HepG2 (cell line): ENCODE measurements at regions of chr1 and their contacts with region 1.

Region 1: DNA sequence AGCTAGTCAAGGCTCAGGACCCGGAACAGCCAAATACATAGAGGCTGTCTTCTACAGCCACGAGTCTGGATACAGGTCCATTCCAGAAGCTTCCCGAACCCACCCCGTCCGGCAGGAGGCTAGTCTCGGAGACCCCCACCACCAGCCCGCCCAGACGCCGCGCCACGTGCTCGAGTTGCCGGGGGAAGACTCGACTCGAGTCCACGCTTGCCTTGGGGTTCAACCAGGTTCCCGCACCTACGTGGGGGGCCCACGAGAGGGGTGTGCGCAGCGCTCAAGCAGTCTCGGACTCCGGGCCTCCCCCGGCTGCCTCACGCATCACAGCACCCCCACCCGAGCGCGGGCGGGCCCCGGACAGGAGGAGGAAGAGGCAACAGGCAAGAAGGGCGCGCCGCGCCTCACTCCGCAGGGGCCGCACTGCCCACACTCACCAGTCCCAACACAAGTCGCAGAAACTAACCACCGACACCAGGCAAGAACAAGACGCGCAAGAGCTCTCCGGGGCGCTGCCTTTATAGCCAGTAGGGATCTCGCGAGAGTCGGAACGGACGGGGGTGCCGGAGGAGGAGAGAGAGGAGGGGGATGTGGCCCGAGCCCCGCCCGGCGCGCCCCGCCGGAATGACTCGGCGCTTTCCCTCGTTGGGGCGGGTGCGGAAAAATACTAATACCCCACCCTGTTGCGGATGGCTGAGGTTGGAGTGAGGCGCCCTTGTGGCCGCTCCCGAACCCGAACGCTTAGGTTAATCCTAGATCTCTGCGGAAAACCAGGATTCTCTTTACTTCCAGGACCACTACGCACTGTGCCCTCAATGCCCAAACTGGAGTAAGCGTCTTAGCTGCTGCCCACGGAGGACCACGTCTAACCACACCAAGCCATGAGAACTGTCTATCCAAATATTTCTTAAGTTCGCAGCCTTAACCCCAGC is at the start of gene PRDX1:
- DNase-seq: peak; percentile 94
- ATAC-seq: peak; percentile 82
- H3K4me3 ChIP-seq: peak within 1 kb of the TSS; percentile 95 to 99 (median 96)
- H3K27ac ChIP-seq: peak within 1 kb of the TSS; percentile 100
- H3K4me1 ChIP-seq: peaks cover 72% of the 10 kb centered on the region
- H3K27me3 ChIP-seq: no peaks in the 10 kb centered on the region; a peak in 1 of 5 replicates
- CTCF ChIP-seq: peak; percentile 47
- EP300 ChIP-seq: peak in 1 of 2 experiments; percentile 85; a peak in 3 of 4 replicates
- POLR2A ChIP-seq: peak; percentile 99 to 100
- RAD21 ChIP-seq: peak; percentile 66
- total RNA-seq, gene PRDX1: 1,898 and 2,651 TPM in 2 replicates

Region 2: DNA sequence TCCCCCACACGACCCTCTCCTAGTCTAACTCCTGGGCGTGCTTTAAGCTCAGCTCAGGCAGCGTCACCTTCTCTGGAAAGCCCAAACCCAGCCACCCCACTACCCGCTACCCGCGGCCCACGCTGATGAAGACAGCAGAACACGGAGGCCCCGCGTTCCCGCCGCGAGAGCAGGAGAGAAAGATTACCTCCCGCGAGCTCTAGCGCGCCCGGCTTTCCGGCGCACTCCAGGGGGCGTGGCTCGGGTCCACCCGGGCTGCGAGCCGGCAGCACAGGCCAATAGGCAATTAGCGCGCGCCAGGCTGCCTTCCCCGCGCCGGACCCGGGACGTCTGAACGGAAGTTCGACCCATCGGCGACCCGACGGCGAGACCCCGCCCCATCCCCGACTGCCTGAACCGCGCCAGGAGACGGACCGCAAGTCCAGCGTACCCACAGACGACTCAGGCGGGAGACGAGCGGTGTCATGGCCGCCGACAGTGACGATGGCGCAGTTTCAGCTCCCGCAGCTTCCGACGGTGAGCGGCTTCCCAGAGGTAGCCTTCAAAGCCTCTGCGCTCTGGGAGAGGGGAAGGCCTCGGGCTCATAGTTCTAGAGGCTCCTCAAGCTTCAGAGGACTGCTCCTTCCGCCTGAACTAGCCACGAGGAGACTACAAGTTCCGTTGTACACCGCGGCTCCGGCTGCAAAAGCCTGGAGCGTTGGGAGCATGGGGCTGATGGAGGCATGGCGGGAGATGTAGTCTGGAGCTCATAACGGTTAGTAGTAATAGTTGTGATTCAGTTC is 181.7 kb before region 1 on chr1 and contains the starts of genes MUTYH and TOE1:
- CTCF ChIA-PET with region 1: no interaction called
- POLR2A ChIA-PET with region 1: interaction called, 16 read pairs
- in situ Hi-C with region 1: no loop called
- intact Hi-C with region 1: no loop called
- DNase-seq: peak; percentile 87
- ATAC-seq: peak; percentile 86
- H3K4me3 ChIP-seq: peak within 1 kb of the TSS; percentile 68 to 83 (median 80)
- H3K27ac ChIP-seq: peak within 1 kb of the TSS; percentile 91
- H3K4me1 ChIP-seq: peaks cover 59% of the 10 kb centered on the region
- H3K27me3 ChIP-seq: no peaks in the 10 kb centered on the region; a peak in 1 of 5 replicates
- CTCF ChIP-seq: peak; percentile 24; the same call in 1 of the 2 replicates
- EP300 ChIP-seq: no peak
- POLR2A ChIP-seq: peak; percentile 87 to 90
- RAD21 ChIP-seq: peak; percentile 56
- total RNA-seq, gene MUTYH: 12.7 and 17.1 TPM in 2 replicates
- total RNA-seq, gene TOE1: 17.4 and 19.0 TPM in 2 replicates

Region 3: GRCh38 chr1:45499415-45499769 is 22.3 kb before region 1 on chr1:
- CTCF ChIA-PET with region 1: no interaction called
- POLR2A ChIA-PET with region 1: interaction called, 144 read pairs
- in situ Hi-C with region 1: no loop called
- intact Hi-C with region 1: no loop called
- DNase-seq: no peak
- ATAC-seq: no peak; the same call in 1 of the 3 replicates
- H3K4me3 ChIP-seq: peak overlapping the region; percentile 74 to 83 (median 77)
- H3K27ac ChIP-seq: peak overlapping the region; percentile 71
- H3K4me1 ChIP-seq: peaks cover 43% of the 10 kb centered on the region
- H3K27me3 ChIP-seq: no peaks in the 10 kb centered on the region; a peak in 1 of 5 replicates
- CTCF ChIP-seq: no peak
- EP300 ChIP-seq: no peak
- POLR2A ChIP-seq: no peak
- RAD21 ChIP-seq: no peak

Region 4: DNA sequence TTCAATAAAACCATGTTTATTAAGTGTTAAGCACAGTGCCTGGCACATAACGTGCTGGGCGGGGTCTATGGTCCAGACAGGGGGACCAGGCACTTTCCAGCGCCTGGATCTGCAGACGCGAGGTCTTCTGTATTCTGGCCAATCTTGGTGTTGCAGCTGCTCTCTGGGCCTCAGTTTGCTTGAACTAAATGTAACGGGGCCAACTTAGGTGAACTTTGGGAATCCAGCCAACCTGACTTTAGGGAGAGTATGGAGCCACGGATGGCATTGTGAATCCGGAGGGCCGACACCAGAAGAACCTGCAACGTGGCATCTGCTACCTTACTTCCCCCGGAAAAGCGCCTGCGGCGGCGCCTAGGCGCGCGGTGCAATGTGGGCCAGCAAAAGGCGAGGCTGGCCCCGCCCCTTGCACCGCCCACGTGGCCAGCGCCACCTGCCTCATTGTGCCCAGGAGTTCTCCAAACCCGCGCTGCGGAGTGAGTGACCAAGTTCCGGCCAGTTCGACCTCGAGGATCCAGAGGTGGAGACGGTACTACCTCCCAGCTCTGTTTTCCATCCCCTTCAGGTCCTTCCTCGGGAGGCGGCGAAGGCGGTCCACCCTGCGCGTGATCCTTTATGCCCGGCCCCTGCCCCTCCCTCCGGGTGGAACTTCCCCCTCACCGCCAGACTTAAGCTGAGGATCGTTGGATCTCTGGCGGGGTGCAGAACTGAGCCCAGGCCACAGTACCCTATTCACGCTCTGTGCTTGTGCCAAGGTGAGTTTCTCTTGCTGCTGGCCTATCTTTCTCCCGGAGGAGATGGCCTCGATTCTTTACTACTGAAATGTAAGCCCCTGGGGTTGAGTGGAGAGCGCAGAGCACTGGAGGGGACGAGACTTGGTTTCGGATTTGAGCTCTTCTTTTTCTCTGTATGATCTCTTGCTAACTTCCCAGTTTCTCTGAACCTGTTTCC is 29.0 kb after region 1 on chr1 and contains the start of gene AKR1A1:
- CTCF ChIA-PET with region 1: no interaction called
- POLR2A ChIA-PET with region 1: interaction called, 690 read pairs
- in situ Hi-C with region 1: no loop called
- intact Hi-C with region 1: loop called (anchors 1 kb)
- DNase-seq: peak; percentile 87
- ATAC-seq: peak; percentile 91
- H3K4me3 ChIP-seq: peak within 1 kb of the TSS; percentile 75 to 87 (median 82)
- H3K27ac ChIP-seq: peak within 1 kb of the TSS; percentile 92
- H3K4me1 ChIP-seq: peaks cover 48% of the 10 kb centered on the region
- H3K27me3 ChIP-seq: no peaks in the 10 kb centered on the region; a peak in 1 of 5 replicates
- CTCF ChIP-seq: peak; percentile 38; the same call in 1 of the 2 replicates
- EP300 ChIP-seq: no peak; a peak in 1 of 4 replicates
- POLR2A ChIP-seq: peak; percentile 93 to 97
- RAD21 ChIP-seq: peak; percentile 54
- total RNA-seq, gene AKR1A1: 217 and 233 TPM in 2 replicates

Region 5: GRCh38 chr1:45569962-45570581 is 48.4 kb after region 1 on chr1:
- CTCF ChIA-PET with region 1: no interaction called
- POLR2A ChIA-PET with region 1: interaction called, 49 read pairs
- in situ Hi-C with region 1: no loop called
- intact Hi-C with region 1: no loop called
- DNase-seq: peak; percentile 65
- ATAC-seq: peak; percentile 81
- H3K4me3 ChIP-seq: no peak overlapping the region
- H3K27ac ChIP-seq: no peak overlapping the region
- H3K4me1 ChIP-seq: no peaks in the 10 kb centered on the region
- H3K27me3 ChIP-seq: no peaks in the 10 kb centered on the region
- CTCF ChIP-seq: peak; percentile 96
- EP300 ChIP-seq: no peak
- POLR2A ChIP-seq: peak in 1 of 2 experiments; percentile 29; a peak in 1 of 4 replicates
- RAD21 ChIP-seq: peak; percentile 87

Region 6: DNA sequence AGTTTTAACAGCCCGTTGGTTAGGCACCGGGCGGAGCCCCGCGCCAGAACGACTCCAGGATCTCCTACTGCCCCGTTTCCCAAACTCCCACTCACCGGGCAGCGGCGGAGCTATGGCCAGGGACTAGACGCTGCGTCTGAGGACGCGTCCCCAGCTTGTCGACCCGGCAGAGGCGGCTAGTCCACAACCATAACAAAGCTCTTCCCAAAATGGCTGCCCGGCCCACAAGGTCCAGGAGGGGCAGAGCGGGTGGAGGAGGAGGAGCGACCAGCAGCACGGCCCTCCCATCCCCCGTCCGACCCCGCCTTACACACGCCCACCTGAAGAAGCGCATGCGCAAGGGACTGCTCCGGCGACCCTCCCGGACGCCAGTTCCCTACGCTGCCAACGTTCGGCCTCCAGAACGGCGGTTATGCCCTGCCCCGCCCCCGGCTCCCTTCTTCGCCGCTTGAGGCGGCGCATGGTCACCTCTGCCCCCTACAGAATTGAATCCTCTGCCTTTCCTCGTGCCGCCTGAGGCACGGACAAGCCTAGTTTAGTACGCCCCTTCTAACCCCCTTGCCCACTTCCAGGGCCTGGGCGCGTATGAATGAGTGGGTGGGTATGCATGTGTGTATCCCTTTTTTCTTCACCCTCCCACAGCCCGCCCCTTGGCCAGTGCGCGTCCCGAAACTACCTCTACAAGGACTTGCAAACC is 164.8 kb after region 1 on chr1 and contains the start of gene GPBP1L1:
- CTCF ChIA-PET with region 1: no interaction called
- POLR2A ChIA-PET with region 1: interaction called, 13 read pairs
- in situ Hi-C with region 1: no loop called
- intact Hi-C with region 1: no loop called
- DNase-seq: peak; percentile 91
- ATAC-seq: peak; percentile 81
- H3K4me3 ChIP-seq: peak within 1 kb of the TSS; percentile 83 to 98 (median 93)
- H3K27ac ChIP-seq: peak within 1 kb of the TSS; percentile 99
- H3K4me1 ChIP-seq: peaks cover 49% of the 10 kb centered on the region
- H3K27me3 ChIP-seq: peaks cover 0 to 5% of the 10 kb centered on the region in 2 experiments; a peak in 2 of 5 replicates
- CTCF ChIP-seq: no peak
- EP300 ChIP-seq: no peak
- POLR2A ChIP-seq: peak; percentile 69 to 89
- RAD21 ChIP-seq: 0 out of 2 replicates have a peak, but pooled peaks have one; percentile 42
- total RNA-seq, gene GPBP1L1: 86.1 and 102 TPM in 2 replicates